Calu3 (cell line): ENCODE measurements at regions of chr7 and their contacts with region 1.

Region 1: DNA sequence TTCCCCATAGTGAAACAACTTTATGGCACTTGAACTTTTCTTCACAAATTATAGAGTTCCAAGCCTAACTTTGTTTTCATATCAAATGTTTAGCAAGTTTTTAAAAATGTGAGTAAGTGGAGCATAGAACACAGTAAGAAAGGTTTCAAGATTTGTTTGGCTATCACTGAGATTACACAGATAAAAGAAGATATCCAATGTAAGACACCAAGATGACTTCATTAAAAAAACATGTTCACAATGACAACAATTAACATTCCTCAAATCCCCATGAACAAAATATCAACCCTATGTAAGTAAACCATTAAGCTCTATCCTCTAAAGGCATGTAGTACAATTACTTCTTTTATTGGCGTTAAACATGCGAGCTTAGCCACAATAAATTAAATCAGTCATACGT is 129.8 kb downstream of the RELN start:
- DNase-seq: no peak
- H3K4me3 Mint-ChIP-seq: no peak overlapping the region
- H3K27ac Mint-ChIP-seq: no peak overlapping the region
- H3K4me1 Mint-ChIP-seq: peaks cover 10% of the 10 kb centered on the region
- H3K27me3 Mint-ChIP-seq: no peaks in the 10 kb centered on the region
- CTCF ChIP-seq: no peak

Region 2: GRCh38 chr7:103843689-103844480 is 15.8 kb before region 1 on chr7:
- CTCF ChIA-PET with region 1: no interaction called
- intact Hi-C with region 1: no loop called
- DNase-seq: no peak
- H3K4me3 Mint-ChIP-seq: no peak overlapping the region
- H3K27ac Mint-ChIP-seq: no peak overlapping the region
- H3K4me1 Mint-ChIP-seq: no peaks in the 10 kb centered on the region
- H3K27me3 Mint-ChIP-seq: peaks cover 3% of the 10 kb centered on the region
- CTCF ChIP-seq: no peak

Region 3: GRCh38 chr7:103914147-103914899 is 54.6 kb after region 1 on chr7:
- CTCF ChIA-PET with region 1: no interaction called
- intact Hi-C with region 1: loop called (anchors 5 kb)
- DNase-seq: peak; percentile 24
- H3K4me3 Mint-ChIP-seq: no peak overlapping the region
- H3K27ac Mint-ChIP-seq: no peak overlapping the region
- H3K4me1 Mint-ChIP-seq: peaks cover 15% of the 10 kb centered on the region
- H3K27me3 Mint-ChIP-seq: no peaks in the 10 kb centered on the region
- CTCF ChIP-seq: no peak